CD14-positive monocyte (primary cell): ENCODE measurements at regions of chr14 and their contacts with region 1.

Region 1: GRCh38 chr14:75487155-75487671 is 35.1 kb upstream of the BATF start:
- DNase-seq: no peak
- H3K4me3 ChIP-seq: no peak overlapping the region
- H3K4me3 Mint-ChIP-seq: no peak overlapping the region
- H3K27ac ChIP-seq: no peak overlapping the region
- H3K27ac Mint-ChIP-seq: no peak overlapping the region
- H3K4me1 ChIP-seq: no peaks in the 10 kb centered on the region
- H3K4me1 Mint-ChIP-seq: peaks cover 2% of the 10 kb centered on the region
- H3K27me3 ChIP-seq: no peaks in the 10 kb centered on the region
- H3K27me3 Mint-ChIP-seq: peaks cover 0 to 4% (median 2%) of the 10 kb centered on the region in 3 donors
- CTCF ChIP-seq: no peak

Region 2: DNA sequence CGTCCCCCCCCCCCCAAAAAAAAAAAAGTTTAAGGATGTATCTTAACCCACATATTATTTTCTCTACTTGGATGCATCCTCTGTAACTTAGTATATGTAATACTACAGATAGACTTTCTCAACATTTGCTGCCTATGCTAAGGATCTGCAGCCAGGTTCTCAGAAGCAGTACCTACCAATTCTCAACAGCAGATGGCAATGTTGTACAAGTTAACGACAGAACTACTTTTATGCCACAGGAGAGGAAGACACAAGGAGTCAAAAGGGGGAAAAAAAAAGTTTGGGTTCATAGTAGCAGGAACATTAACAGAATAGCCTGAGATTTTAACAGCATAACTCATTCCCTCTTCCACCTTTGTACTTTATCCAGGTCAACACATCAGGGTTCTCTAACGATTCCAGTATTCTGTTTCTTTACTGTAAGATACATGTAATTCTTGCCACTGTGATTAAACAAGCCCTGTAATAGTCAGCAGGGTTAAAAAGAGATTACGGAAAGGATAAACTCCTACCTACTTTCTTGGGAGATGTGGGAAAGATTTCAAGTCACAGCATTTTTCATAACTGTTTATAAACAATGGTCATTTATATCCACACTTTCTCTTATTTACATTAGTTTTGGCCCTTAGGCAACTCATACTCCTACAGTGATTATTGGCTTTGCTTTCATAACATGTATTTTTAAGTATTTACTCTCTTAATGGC is 354.7 kb before region 1 on chr14:
- intact Hi-C with region 1: loop called in 1 of 2 experiments (anchors 5 kb)
- DNase-seq: peak; percentile 64 to 85 (median 74)
- H3K4me3 ChIP-seq: no peak overlapping the region
- H3K4me3 Mint-ChIP-seq: no peak overlapping the region
- H3K27ac ChIP-seq: no peak overlapping the region
- H3K27ac Mint-ChIP-seq: peak overlapping the region in 6 of 7 donors; percentile 24 to 78 (median 55)
- H3K4me1 ChIP-seq: peaks cover 10 to 13% of the 10 kb centered on the region in 2 donors
- H3K4me1 Mint-ChIP-seq: peaks cover 14% of the 10 kb centered on the region
- H3K27me3 ChIP-seq: no peaks in the 10 kb centered on the region
- H3K27me3 Mint-ChIP-seq: no peaks in the 10 kb centered on the region
- CTCF ChIP-seq: peak; percentile 69